Prostate gland (tissue), 2 donors: ENCODE measurements at regions of chr4 and their contacts with region 1.

Region 1: DNA sequence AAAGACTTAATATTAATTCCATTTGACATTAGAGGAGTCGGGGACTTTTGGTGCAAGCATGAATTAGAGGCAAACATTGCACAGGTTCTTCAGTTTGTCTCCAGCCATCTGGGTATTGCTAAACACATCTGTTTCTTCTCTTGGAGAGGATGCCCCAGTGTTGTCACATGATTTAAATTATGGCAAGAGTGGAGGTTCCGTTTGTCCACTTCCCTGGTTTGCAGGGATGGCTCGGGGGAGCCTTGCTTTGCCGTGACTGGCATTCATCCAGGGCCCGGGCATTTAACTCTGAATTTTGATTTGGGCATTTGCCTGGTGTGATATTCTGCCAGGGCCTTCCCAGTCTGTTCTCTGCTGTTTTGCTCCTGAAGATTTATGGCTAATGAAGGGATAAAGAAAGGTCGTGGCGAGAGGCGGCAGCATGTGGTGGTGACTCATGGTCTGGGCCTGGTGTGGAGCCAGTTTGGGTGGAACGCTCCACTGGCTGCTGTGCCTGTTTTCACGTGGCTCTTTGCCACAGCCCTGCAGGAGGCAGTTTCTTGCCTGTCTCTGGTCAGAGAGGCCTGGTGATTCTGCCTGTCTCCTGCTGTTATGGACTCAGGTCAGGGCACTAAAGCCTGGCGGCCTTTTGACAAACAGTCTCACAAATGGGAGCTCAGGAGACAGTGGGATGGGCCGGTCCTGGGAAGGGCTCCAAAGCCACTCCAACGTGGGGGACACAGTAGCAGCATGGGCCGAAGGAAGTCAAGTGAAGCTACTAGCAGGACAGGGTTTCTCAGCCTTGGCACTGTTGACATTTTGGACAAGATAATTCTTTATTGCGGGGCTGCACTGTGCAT is 99.4 kb upstream of the PGRMC2 start:
- DNase-seq: peak; percentile 93
- H3K4me3 ChIP-seq: no peak overlapping the region
- H3K27ac ChIP-seq: peak overlapping the region; percentile 73 to 74
- H3K4me1 ChIP-seq: no peaks in the 10 kb centered on the region
- H3K27me3 ChIP-seq: no peaks in the 10 kb centered on the region
- CTCF ChIP-seq: peak in 2 of 4 experiments; percentile 16 to 21
- POLR2A ChIP-seq: no peak

Region 2: DNA sequence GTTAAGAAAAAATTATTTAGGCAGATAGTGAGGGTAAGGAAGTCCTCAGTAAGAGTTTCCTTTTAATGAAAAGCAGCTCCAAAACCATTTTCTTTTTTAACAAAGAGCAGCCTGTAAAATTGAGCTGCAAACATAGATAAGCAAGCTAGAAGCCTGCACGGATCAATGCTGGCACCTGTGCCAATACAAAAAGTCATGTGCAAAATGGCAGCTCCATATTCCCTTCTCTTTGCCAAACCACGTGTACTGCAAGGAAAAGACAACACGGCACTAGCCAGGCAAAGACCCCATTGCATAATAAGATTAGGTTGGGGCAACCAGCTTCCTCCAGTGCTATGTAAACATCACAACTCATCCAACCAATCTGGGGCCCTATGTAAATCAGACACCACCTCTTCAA is 1022.6 kb before region 1 on chr4:
- intact Hi-C with region 1: no loop called
- DNase-seq: no peak
- H3K4me3 ChIP-seq: no peak overlapping the region
- H3K27ac ChIP-seq: no peak overlapping the region
- H3K4me1 ChIP-seq: no peaks in the 10 kb centered on the region
- H3K27me3 ChIP-seq: no peaks in the 10 kb centered on the region
- CTCF ChIP-seq: no peak
- POLR2A ChIP-seq: no peak

Region 3: GRCh38 chr4:128249787-128250668 is 137.0 kb before region 1 on chr4:
- intact Hi-C with region 1: no loop called
- DNase-seq: no peak
- H3K4me3 ChIP-seq: no peak overlapping the region
- H3K27ac ChIP-seq: no peak overlapping the region
- H3K4me1 ChIP-seq: no peaks in the 10 kb centered on the region
- H3K27me3 ChIP-seq: no peaks in the 10 kb centered on the region
- CTCF ChIP-seq: no peak
- POLR2A ChIP-seq: no peak

Region 4: DNA sequence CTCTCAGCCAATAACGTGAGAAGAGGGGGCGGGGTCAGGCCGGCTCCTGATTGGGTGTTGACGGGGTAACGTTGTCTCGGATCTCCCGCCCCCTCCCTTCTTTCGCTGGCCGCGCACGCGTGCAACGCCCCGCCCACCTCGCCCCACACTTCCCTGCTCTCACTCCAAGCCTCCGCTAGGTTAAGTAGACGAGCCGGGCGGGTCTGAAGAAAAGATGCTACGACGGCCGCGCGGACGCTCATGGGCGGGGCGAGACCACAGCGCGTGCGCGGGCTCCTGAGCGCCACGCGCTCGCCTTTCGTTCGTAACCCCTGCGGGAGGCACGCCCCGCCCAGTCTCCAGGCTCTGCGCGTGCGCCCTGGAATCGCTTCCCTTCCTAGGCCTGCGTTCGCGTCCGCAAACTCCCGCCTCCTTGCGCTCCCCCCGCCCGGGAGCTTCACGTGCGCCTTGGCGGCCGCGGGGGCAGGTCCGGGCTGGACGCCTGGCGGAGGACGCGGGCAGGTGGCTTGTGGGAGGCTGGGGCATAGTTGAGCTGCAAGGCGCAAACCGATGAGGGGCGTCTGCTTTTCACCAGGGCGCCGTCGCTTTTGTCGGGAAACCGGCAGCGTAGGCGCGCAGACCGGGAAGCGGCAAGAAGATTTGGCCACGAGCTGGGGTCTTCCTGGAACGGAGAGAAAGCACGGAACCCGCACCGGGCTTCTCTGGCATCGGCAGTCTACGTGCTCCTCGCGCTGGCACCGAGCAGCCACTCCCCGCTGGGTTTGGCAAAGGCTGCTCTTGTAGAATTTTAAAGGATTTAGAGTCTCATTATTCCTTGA is 98.9 kb before region 1 on chr4:
- intact Hi-C with region 1: loop called (anchors 5 kb)
- DNase-seq: peak; percentile 99
- H3K4me3 ChIP-seq: peak overlapping the region; percentile 84 to 89
- H3K27ac ChIP-seq: peak overlapping the region; percentile 90 to 94
- H3K4me1 ChIP-seq: no peaks in the 10 kb centered on the region
- H3K27me3 ChIP-seq: no peaks in the 10 kb centered on the region
- CTCF ChIP-seq: peak in 3 of 4 experiments; percentile 28 to 67 (median 59)
- POLR2A ChIP-seq: peak; percentile 85

Region 5: DNA sequence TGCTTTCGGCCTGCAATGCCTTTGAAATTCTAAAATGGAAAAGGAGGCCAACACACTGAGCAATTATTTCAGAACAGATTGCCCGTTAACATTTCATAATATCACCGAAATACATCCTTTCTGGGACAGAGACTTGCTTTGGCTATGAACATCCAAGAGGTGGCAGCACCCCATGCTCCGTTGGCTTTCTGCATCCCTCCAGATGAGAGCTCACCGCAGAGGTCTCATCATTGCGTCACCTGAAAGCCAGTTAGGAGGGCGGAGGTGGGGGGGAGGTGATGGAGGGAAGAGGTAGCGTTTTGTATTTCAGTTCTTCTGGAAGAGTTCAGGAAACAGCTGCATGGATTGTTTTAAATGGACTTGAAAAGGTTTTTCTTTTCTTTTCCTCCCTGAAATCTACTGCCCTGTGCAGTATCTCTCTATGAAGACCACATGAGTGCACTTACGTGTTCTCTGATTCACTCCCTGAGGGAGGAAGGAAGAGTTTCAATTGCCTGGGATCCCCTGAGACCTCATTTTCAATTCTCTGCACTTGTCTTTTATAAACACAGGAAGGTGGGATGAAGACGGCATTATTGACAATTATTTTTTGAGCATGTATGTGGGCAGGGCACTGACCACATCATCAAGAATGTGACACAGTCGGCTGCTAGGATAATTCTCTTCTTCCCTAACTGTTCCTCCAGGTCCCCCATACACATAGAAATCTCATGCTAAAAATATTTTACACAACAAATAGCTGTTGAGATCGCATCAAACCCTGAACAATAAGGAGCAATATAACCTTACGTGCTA is 67.5 kb after region 1 on chr4:
- intact Hi-C with region 1: loop called (anchors 2 kb)
- DNase-seq: peak; percentile 78
- H3K4me3 ChIP-seq: no peak overlapping the region
- H3K27ac ChIP-seq: no peak overlapping the region
- H3K4me1 ChIP-seq: no peaks in the 10 kb centered on the region
- H3K27me3 ChIP-seq: no peaks in the 10 kb centered on the region
- CTCF ChIP-seq: peak; percentile 35 to 84 (median 71)
- POLR2A ChIP-seq: no peak

Region 6: GRCh38 chr4:128574706-128575105 is 187.7 kb after region 1 on chr4:
- intact Hi-C with region 1: loop called (anchors 5 kb)
- DNase-seq: peak; percentile 82
- H3K4me3 ChIP-seq: no peak overlapping the region
- H3K27ac ChIP-seq: no peak overlapping the region
- H3K4me1 ChIP-seq: no peaks in the 10 kb centered on the region
- H3K27me3 ChIP-seq: no peaks in the 10 kb centered on the region
- CTCF ChIP-seq: peak; percentile 35 to 80 (median 63)
- POLR2A ChIP-seq: no peak

Region 7: DNA sequence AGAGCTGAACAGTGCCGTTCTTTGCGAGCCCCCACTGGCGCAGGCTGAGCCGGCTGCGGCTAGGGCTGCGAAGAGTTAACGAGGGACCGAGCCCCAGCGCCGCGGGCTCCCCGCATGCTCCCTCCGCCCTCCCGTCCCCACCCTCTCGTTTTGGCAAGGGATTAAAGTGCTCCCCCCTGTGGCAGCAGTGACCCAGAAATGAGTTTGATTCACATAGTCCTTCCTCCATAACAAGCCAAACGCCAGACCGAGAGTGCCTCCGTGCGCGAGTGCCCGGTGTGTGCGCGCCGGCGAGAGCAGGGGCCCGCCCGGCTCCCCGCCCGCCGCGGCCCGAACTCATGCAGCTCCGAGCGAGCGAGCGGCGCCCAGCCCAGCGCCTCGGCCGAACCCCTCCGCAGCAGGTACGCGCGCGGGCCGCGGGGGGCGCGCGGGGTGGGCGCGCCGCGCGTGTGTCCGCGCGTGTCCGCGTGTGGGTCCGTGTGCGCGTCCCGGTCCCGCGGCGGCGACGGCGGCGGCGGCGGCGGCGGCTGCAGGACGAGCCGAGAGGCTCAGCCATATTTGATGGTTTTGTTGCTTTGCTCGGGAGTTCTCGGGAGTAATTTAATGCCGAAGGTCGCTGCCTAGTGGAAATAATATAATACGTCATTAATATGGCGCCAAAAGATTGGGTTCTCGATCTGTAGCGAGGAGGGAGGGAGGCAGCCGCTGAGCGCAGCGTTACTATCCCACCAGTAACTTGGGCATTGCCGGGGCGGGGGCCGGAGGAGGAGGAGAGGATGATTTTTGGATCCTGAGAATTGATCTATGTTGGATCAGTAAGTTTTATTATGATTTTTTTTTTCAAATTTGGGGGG is 422.7 kb after region 1 on chr4 and contains the start of gene JADE1:
- intact Hi-C with region 1: loop called (anchors 5 kb)
- DNase-seq: peak; percentile 93
- H3K4me3 ChIP-seq: peak within 1 kb of the TSS; percentile 59 to 80
- H3K27ac ChIP-seq: peak within 1 kb of the TSS; percentile 85 to 89
- H3K4me1 ChIP-seq: no peaks in the 10 kb centered on the region
- H3K27me3 ChIP-seq: no peaks in the 10 kb centered on the region
- CTCF ChIP-seq: peak; percentile 38 to 79 (median 63)
- POLR2A ChIP-seq: peak; percentile 42
- total RNA-seq, gene JADE1: 31.6 to 33.9 TPM